Mammary epithelial cell (primary cell): ENCODE measurements at regions of chr12 and their contacts with region 1.

Region 1: DNA sequence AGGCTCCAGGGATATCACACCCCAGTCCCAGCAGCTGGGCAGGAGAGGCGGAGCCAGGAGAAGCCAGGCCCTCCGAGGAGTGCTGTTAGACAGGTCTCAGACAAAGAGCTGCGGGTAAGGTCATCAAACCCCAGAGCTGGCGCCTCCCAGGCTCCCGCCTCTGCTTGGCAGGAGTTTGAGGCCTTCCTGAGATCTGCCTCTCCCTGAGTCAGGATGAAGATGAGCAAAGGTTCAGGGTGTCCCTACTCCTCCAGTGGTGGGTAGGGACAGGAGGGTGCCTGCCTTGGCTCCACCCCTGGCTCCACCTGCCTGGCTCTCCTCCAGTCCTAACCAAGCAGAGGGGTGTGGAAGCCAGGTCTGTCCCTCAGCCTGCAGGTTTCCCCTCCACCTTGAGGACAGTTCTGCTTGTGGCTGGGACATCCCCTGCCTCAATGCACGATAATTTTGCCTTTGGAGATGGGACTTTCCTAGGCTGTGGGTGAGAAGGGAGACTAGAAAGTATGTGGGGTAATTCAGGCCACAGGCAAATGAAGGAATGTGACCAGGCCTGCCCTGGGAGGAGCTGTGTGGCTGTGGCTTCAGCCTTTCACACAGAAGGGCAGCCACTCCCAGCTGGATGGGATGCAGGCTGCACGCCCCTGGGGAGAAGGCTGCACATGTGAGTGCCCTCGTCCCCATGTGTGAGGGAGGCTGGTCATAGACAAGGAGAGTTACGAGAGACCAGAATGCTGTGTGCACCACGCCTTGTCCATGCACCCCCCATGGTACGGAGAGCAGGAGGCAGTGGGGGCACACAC is 2.2 kb downstream of the PLEKHG6 start:
- DNase-seq: peak; percentile 96
- H3K4me3 ChIP-seq: no peak overlapping the region
- H3K27ac ChIP-seq: peak overlapping the region; percentile 54
- H3K4me1 ChIP-seq: peaks cover 37% of the 10 kb centered on the region
- H3K27me3 ChIP-seq: no peaks in the 10 kb centered on the region
- CTCF ChIP-seq: no peak

Region 2: DNA sequence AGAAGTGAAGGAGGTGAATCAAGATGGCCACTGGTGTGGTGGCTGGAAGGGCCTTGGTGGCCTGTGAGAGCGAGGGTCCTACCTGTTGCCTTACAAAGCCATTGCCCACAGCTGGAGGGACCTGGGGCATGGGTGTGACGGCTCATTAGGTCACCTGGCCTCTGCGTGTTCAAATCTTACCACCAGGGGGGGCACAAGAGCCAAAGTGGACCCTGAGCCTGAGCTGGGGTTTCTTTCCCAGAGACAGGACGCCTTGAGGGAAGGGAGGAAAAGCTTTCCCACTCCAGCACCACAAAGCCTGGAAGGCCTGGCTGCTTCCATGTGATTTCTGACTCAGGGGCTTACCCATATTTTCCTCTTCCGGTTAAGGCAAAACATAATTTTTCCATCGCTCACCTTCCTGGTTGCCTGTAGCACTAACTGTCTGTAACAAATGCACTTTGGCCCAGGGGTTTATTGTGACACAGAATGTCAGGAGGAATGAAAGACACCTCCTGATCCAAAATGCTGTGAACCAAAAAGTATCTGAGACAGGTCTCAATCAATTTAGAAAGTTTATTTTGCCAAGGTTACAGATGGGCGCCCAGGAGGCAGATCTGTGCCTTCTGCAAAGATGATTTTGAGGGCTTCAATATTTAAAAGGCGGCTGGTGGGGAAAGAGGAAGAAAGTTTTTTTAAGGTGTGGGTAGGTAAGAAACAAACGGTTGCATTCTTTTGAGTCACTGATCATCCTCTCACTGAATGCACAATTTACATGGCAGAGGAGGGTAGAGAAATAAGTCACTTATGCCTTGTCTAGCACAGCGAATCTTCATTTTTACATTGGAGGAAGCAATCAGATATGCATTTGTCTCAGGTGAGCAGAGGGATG is 116.8 kb before region 1 on chr12:
- CTCF ChIA-PET with region 1: no interaction called
- dilution Hi-C with region 1: no loop called
- in situ Hi-C with region 1: no loop called
- intact Hi-C with region 1: no loop called
- DNase-seq: peak; percentile 88
- H3K4me3 ChIP-seq: no peak overlapping the region
- H3K27ac ChIP-seq: peak overlapping the region; percentile 52
- H3K4me1 ChIP-seq: peaks cover 20% of the 10 kb centered on the region
- H3K27me3 ChIP-seq: no peaks in the 10 kb centered on the region
- CTCF ChIP-seq: peak; percentile 82 to 93

Region 3: DNA sequence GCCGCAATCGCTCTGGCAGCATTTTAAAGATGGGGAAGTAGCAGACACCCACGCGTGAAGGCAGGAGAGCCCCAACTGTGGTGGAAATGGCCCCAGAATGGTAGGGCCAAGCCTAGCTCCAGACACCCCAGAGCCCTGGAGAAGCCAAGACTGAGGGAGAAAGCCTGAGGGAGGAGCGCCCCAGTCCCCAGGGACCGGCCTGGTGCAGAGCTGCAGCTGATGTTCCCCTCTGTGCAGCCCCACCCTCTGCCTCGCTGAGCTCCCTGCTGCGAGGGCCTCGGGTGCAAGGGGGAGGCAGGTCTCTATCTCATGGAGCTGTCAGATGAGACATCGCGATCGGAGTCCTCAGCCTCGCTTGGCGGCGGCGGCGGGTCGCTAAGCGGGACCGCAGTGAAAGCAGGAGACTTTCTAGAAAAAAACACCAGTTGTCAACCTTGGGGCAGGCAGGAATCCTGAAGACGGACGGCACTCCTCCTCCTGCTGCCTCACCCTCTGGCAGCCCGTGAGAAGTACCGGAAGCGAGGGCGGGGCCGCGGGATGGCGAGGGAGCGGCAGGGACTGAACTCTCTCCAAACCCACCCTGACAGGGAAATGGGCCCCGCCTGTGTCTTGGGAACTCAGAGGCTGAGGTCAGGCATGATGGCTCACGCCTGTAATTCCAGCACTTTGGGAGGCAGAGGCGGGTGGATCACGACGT is 227.6 kb after region 1 on chr12:
- CTCF ChIA-PET with region 1: interaction called, 11 read pairs
- dilution Hi-C with region 1: no loop called
- in situ Hi-C with region 1: no loop called
- intact Hi-C with region 1: no loop called
- DNase-seq: peak; percentile 97
- H3K4me3 ChIP-seq: peak overlapping the region in 2 of 3 experiments; percentile 23 to 31
- H3K27ac ChIP-seq: peak overlapping the region; percentile 64
- H3K4me1 ChIP-seq: peaks cover 43% of the 10 kb centered on the region
- H3K27me3 ChIP-seq: no peaks in the 10 kb centered on the region
- CTCF ChIP-seq: peak in 1 of 2 donors; percentile 5